ENCODE measurements at regions of chr20 and their contacts with region 1.

Region 1: DNA sequence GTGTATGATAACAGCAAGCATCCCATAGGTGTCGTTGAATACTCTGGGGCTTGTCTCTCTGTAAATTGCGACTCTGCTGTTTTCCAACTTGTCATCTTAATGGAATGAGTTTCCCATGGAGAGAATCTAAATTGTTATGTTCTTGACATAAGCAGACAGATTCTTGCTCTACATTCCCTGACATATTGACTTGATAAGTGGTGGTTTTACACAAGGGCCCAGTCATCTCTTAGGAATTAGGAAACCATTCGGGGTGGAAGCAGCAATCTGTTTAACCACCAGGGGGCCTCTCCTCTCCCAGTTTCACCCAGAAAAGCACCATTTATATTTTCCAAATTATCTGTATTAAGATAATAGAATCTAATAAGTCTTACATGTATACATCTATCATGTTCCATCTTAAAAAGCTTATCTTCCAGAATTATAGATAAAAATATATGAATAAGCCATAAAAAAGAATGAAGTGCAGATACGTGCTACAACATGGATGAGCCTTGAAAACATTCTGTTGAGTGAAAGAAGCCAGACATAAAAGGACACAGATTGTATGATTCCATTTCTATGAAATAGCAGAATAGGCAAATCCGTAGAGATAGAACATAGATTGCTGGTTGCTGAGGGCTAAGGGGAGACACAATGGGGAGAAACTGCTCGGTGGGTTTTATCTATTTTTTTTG is 23.1 kb upstream of the MROH8 start:
- DNase-seq: peak; percentile 57
- H3K4me3 ChIP-seq: no peak overlapping the region
- H3K27ac ChIP-seq: peak overlapping the region in 1 of 2 donors; percentile 33
- H3K4me1 ChIP-seq: peaks cover 3% of the 10 kb centered on the region
- H3K27me3 ChIP-seq: no peaks in the 10 kb centered on the region
- CTCF ChIP-seq: peak; percentile 49 to 81 (median 67)
- POLR2A ChIP-seq: no peak

Region 2: DNA sequence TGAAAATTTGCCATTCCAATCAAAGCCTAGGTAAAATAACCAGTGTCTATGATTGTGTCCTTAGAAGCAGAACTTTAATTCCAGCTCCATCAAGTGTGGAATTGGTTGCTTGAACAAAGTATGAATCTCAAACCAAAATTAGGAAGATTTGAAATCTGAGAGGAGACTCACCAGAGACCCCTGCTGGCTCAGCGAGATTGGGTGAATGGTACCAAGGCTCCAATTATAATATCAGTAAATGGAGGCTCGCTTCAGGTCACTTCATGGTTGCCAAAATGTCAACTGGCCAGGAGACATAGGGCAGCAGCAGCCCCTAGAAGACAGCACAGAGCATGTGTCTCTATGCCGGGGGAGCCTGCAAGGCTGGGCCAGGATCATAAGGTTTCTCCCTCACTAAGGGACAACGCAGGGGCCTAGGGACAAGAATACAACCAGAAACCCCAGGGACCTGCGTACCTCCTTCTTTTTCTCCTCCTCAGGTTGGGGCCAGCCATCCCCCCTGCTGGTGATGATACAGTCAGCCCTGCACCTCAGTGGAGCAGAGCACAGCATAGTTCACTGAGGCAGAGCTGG is 120.6 kb before region 1 on chr20:
- intact Hi-C with region 1: no loop called
- DNase-seq: peak; percentile 23
- H3K4me3 ChIP-seq: no peak overlapping the region
- H3K27ac ChIP-seq: no peak overlapping the region
- H3K4me1 ChIP-seq: no peaks in the 10 kb centered on the region
- H3K27me3 ChIP-seq: no peaks in the 10 kb centered on the region
- CTCF ChIP-seq: peak in 1 of 3 experiments; percentile 27
- POLR2A ChIP-seq: no peak

Region 3: DNA sequence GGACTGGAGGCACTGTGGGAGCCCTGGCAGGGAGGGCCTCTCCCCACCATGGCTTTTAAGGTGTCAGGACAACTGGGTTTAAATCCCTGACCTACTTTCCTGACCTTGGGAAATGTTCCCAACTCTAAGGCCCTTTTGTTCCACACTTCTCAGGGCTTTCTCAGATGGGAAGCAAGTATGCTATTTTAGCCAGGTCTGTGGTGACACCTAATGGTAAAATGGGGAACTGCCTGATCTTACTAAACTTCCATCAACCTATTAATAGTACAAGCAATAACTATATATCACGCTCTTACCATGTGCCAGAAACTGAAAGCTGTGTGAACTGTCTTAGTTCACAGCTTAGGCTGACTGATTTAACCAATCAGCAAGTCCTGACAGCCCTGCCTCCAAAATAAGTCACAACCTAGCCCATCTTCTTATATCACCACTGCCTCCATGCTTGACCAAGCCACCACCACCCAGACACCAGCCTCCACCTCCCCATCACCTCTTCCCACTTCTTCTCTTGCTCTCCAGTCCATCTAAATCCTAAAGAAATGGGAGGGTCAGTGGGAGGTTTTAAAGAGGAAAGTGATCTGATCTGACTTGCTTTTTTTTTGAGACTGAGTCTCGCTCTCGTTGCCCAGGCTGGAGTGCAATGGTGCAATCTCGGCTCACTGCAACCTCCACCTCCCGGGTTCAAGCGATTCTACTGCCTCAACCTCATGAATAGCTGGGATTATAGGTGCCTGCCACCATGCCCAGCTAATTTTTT is 332.2 kb after region 1 on chr20:
- intact Hi-C with region 1: loop called (anchors 5 kb)
- DNase-seq: peak; percentile 75
- H3K4me3 ChIP-seq: no peak overlapping the region
- H3K27ac ChIP-seq: no peak overlapping the region
- H3K4me1 ChIP-seq: no peaks in the 10 kb centered on the region
- H3K27me3 ChIP-seq: no peaks in the 10 kb centered on the region
- CTCF ChIP-seq: peak; percentile 76 to 93 (median 89)
- POLR2A ChIP-seq: no peak

Measured in testis (tissue), 5 donors.